Calu3 (cell line): ENCODE measurements at regions of chr1 and their contacts with region 1.

Region 1: GRCh38 chr1:158124999-158125398 is 55.7 kb upstream of the CD1D start:
- DNase-seq: peak; percentile 85
- H3K4me3 Mint-ChIP-seq: no peak overlapping the region
- H3K27ac Mint-ChIP-seq: no peak overlapping the region
- H3K4me1 Mint-ChIP-seq: peaks cover 23% of the 10 kb centered on the region
- H3K27me3 Mint-ChIP-seq: peaks cover 46% of the 10 kb centered on the region
- CTCF ChIP-seq: peak; percentile 91

Region 2: DNA sequence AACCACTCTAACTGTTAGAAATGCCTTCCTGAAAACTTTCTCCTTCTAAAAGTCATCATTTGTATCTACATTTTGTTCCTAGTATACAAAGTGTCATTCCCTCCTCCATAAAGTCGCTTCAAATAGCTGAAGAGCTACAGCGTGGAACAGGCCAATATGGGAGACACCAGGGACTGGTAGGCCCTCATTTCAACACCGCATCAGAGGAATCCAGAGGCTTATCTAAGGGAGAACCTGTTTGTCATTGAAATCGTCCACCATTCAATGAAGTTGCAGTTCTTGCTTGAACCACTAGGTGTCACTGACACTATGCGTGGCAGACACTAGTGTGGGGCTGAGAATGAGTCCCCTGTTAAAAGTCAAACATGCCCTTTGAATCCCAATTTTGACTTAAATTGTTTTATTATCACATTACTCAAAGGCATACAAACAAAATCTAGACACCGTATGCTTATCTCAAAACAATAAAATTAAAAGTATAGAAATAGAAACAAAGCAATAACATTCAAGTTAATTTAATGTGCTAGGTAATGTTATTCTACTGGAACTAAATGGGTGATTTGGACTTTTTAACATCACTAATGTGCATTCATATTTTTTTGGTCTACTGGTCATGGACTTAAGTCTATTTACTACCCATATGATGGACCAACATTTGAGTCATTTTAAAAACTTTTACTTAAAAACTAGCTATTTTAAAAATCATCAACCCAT is 755.0 kb before region 1 on chr1:
- CTCF ChIA-PET with region 1: no interaction called
- intact Hi-C with region 1: loop called (anchors 5 kb)
- DNase-seq: peak; percentile 74
- H3K4me3 Mint-ChIP-seq: no peak overlapping the region
- H3K27ac Mint-ChIP-seq: no peak overlapping the region
- H3K4me1 Mint-ChIP-seq: no peaks in the 10 kb centered on the region
- H3K27me3 Mint-ChIP-seq: peaks cover 11% of the 10 kb centered on the region
- CTCF ChIP-seq: peak; percentile 91

Region 3: DNA sequence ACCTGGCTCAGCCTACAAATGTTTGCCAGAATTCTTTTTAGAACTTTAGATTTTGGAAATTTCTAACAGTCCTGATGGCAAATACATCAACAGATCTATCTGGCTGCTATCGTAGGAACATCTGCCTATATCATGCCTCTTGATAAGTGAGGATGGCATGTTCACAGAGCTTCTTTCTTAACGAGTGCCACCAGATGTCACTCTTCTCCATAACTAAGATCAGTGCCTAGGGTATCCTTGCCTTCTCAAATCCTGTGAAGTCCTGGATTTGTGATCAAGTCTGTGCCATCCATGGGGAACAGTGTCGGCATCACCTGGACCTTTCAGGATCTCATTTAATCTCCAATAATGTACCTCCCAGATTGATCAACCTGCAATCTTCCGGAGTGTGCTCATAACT is 246.9 kb before region 1 on chr1:
- CTCF ChIA-PET with region 1: interaction called, 7 read pairs
- intact Hi-C with region 1: loop called (anchors 2 kb)
- DNase-seq: peak; percentile 44
- H3K4me3 Mint-ChIP-seq: no peak overlapping the region
- H3K27ac Mint-ChIP-seq: no peak overlapping the region
- H3K4me1 Mint-ChIP-seq: peaks cover 27% of the 10 kb centered on the region
- H3K27me3 Mint-ChIP-seq: no peaks in the 10 kb centered on the region
- CTCF ChIP-seq: peak; percentile 53

Region 4: GRCh38 chr1:157992031-157992832 is 132.8 kb before region 1 on chr1:
- CTCF ChIA-PET with region 1: interaction called, 137 read pairs
- intact Hi-C with region 1: loop called (anchors 1 kb)
- DNase-seq: peak; percentile 83
- H3K4me3 Mint-ChIP-seq: peak overlapping the region; percentile 93
- H3K27ac Mint-ChIP-seq: peak overlapping the region; percentile 29
- H3K4me1 Mint-ChIP-seq: peaks cover 36% of the 10 kb centered on the region
- H3K27me3 Mint-ChIP-seq: peaks cover 23% of the 10 kb centered on the region
- CTCF ChIP-seq: peak; percentile 92

Region 5: GRCh38 chr1:158998781-158999161 is 873.8 kb after region 1 on chr1:
- CTCF ChIA-PET with region 1: no interaction called
- intact Hi-C with region 1: loop called (anchors 2 kb)
- DNase-seq: peak; percentile 51
- H3K4me3 Mint-ChIP-seq: peak overlapping the region; percentile 63
- H3K27ac Mint-ChIP-seq: peak overlapping the region; percentile 38
- H3K4me1 Mint-ChIP-seq: peaks cover 29% of the 10 kb centered on the region
- H3K27me3 Mint-ChIP-seq: no peaks in the 10 kb centered on the region
- CTCF ChIP-seq: peak; percentile 83